Dorsolateral prefrontal cortex (tissue), 120 donors: ENCODE measurements at regions of chr14 and their contacts with region 1.

Region 1: DNA sequence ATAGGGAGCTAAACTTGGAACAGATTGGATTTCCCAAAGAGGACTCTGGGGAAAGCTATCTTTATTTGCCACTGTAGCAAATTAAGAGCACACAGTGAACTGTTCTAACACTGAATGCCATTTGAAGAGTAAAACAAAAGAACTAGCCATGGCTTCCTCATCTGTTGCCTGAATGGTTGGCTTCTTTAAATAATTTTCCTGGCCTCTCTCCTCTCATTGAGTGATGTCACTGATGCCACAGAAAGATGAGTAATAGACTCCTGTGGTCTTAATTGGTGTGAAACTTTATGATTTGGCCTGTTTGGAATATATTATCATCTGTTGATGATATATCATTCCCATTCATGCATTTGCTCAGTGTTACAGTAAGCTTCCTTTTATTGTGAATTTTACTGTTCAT is 42.5 kb downstream of the WDR20 start:
- DNase-seq: no peak
- H3K4me3 ChIP-seq: peak overlapping the region in 1 of 59 donors; percentile 5
- H3K27ac ChIP-seq: peak overlapping the region; percentile 13 to 100 (median 92)
- H3K27me3 ChIP-seq: no peaks in the 10 kb centered on the region
- CTCF ChIP-seq: no peak

Region 2: DNA sequence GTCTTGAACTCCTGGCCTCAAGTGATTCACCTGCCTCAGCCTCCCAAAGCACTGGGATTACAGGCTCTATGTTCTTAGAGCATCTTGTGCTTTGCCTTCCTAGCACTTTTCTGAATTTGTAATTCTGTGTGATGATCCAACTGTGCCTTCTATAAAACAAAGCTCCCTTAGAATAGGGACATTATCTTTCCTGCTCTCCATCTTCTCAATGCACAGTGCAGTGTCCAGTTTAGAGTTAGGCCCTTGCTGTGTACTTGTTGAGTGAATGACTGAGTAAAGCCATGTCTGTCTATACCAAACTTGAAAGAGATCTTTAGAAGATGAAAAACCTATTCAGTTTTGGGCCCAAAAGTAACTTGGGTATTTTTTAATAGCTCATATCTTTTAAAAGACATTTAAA is 37.3 kb before region 1 on chr14:
- intact Hi-C with region 1: loop called in 1 of 2 experiments (anchors 5 kb)
- DNase-seq: no peak
- H3K4me3 ChIP-seq: peak overlapping the region in 4 of 59 donors; percentile 7 to 37 (median 12)
- H3K27ac ChIP-seq: peak overlapping the region in 53 of 59 donors; percentile 2 to 98 (median 69)
- H3K27me3 ChIP-seq: no peaks in the 10 kb centered on the region
- CTCF ChIP-seq: peak in 1 of 56 donors; percentile 4

Region 3: DNA sequence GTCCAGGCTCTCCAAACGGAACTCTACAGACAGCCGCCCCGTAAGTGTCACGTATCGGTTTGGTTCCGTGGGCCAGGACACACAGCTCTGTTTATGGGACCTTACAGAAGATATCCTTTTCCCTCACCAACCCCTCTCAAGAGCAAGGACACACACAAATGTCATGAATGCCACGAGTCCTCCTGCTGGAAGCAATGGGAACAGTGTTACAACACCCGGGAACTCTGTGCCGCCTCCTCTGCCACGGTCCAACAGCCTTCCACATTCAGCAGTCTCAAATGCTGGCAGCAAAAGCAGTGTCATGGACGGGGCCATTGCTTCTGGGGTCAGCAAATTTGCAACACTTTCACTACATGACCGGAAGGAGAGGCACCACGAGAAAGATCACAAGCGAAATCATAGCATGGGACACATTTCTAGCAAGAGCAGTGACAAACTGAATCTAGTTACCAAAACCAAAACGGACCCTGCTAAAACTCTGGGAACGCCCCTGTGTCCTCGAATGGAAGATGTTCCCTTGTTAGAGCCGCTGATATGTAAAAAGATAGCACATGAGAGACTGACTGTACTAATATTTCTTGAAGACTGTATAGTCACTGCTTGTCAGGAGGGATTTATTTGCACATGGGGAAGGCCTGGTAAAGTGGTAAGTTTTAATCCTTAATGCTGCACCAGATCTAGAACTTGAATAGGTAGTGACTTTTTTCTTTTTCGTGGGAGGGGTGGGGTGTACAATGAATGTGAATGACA is 27.2 kb after region 1 on chr14:
- intact Hi-C with region 1: no loop called
- DNase-seq: peak in 9 of 10 donors; percentile 51 to 81 (median 75)
- H3K4me3 ChIP-seq: no peak overlapping the region
- H3K27ac ChIP-seq: peak overlapping the region in 58 of 59 donors; percentile 27 to 100 (median 90)
- H3K27me3 ChIP-seq: no peaks in the 10 kb centered on the region
- CTCF ChIP-seq: peak in 52 of 56 donors; percentile 24 to 74 (median 50)